A549 (cell line): ENCODE measurements at regions of chr3 and their contacts with region 1.

Region 1: DNA sequence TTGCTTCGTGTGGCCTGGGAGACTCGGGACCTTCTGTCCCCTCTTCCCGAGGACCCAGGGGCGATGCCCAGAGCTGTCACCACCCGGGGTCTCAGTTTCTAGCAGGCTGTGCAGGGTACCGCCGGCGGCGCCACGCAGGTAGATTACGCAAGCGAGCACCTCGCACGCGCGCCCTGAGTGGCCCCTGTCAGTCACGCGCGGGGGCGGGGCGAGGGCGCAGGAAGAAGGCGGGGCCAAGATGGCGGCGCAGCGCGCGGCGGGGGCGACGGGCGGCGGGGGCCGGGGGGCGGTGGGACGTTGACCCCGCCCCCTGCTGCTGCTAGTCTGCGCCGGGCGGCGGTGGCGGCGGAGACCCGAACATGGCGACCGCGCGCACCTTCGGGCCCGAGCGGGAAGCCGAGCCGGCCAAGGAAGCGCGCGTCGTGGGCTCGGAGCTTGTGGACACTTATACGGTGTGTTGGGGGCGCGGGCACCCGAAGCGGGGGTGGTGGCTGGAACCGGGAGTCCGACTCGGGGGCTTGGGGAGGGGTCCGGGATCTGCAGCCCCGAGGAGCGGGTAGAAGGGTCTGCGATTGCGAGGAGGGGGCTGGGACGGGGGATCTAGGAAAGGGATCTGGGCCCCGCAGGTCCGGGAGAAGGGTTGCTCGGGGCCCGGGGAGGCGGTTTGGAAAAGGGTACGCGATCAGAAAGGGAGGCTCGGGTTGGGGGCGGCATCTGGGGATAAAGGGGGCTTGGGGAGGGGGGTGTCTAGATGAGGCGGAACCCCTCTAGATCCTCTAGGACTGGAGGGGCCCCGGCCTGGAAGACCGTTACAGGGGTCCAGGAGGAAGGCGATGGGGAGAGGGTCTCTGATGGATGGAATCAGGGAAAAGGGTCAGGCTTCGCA is at the start of gene NISCH:
- DNase-seq: peak; percentile 60 to 68
- ATAC-seq: peak; percentile 57 to 77
- H3K4me3 ChIP-seq: peak within 1 kb of the TSS; percentile 66
- H3K27ac ChIP-seq: peak within 1 kb of the TSS; percentile 84 to 99
- H3K4me1 ChIP-seq: peaks cover 16% of the 10 kb centered on the region
- CTCF ChIP-seq: no peak
- EP300 ChIP-seq: no peak
- POLR2A ChIP-seq: peak; percentile 75
- RAD21 ChIP-seq: no peak
- polyA plus RNA-seq, gene NISCH: 17.3 and 19.2 TPM in 2 replicates

Region 2: DNA sequence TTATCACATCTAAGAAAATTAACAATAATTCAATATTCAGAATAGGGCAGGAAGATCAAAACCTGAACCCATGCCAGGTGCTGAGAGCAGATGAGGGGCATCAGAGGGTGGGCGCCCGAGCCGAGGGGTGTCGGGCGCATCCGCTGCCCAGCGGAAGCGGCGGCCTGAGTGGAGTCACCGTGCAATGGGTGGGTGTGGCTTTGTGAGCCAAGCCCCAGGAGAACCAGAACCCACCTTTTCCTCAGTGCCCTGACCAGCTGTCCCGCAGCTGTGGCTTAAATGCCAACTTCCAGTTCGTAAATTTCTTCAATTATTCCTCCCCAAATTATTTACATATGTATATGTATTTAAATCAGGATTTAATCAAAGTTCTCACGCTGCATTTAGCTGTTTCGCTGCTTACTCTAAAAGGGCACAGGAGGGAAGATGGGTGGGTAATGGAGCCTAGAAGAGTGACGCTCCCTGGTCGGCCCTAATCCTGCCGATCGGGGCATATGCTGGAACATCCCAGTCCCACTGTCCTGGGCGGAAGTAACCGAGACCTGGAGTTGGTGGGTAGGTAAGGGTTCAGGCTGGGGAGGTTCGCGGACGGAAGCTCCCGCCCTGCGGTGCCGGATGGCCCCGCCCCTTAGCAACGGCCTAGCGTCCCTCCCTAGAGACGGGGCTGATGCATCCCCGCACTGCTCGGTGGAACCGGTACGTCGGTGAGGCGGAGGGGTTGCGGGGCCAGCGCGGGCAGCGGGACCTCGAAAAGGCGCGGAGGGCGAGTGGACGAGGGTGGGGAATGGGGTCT is 138.1 kb before region 1 on chr3:
- CTCF ChIA-PET with region 1: no interaction called
- POLR2A ChIA-PET with region 1: no interaction called
- DNase-seq: no peak
- ATAC-seq: no peak
- H3K4me3 ChIP-seq: no peak overlapping the region
- H3K27ac ChIP-seq: no peak overlapping the region
- H3K4me1 ChIP-seq: peaks cover 16% of the 10 kb centered on the region
- CTCF ChIP-seq: no peak
- EP300 ChIP-seq: no peak
- POLR2A ChIP-seq: no peak
- RAD21 ChIP-seq: no peak

Region 3: DNA sequence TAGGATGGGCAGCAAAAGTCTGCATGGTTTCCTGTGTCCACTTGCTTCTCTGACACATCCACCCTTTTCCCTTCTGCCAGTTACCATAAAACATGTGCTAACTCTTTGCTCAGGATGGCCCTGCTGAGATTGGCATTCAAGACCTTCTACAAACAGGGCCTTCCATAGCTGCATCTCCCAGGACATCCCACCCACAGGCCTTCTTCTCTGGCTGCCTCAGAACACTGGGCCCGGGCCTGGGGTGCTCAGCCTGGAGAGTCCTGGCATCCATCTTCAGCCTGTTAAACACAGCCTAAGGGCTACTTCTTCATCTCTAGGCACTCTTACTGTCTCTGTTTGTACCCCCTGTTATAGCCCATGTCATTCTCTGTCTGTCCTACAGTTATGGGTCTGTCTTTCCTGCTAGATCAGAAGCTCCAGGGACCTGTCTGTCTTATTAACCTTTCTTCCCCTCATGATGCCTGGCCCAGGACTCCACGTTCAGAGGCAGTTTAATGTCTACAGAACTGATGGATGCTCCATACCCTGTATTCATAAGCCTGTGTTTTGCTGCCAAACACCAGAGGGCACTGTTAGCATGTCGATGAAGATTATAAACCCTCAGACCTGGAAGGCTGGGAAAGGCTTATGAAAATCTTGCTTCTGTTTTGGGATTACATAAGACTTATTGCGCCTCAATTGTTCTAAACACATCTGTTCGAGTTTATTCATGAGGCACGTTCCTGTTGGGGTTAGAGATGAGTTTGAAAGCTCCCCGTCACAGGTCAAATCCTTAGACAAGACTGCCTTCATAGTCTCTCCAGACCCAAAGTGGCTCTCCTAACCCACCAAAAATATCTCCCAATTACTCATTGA is 27.1 kb before region 1 on chr3:
- CTCF ChIA-PET with region 1: interaction called, 351 read pairs
- POLR2A ChIA-PET with region 1: no interaction called
- DNase-seq: peak; percentile 45 to 61
- ATAC-seq: peak; percentile 93 to 98
- H3K4me3 ChIP-seq: no peak overlapping the region
- H3K27ac ChIP-seq: no peak overlapping the region
- H3K4me1 ChIP-seq: no peaks in the 10 kb centered on the region
- CTCF ChIP-seq: peak; percentile 68
- EP300 ChIP-seq: no peak
- POLR2A ChIP-seq: no peak
- RAD21 ChIP-seq: peak; percentile 64 to 74

Region 4: DNA sequence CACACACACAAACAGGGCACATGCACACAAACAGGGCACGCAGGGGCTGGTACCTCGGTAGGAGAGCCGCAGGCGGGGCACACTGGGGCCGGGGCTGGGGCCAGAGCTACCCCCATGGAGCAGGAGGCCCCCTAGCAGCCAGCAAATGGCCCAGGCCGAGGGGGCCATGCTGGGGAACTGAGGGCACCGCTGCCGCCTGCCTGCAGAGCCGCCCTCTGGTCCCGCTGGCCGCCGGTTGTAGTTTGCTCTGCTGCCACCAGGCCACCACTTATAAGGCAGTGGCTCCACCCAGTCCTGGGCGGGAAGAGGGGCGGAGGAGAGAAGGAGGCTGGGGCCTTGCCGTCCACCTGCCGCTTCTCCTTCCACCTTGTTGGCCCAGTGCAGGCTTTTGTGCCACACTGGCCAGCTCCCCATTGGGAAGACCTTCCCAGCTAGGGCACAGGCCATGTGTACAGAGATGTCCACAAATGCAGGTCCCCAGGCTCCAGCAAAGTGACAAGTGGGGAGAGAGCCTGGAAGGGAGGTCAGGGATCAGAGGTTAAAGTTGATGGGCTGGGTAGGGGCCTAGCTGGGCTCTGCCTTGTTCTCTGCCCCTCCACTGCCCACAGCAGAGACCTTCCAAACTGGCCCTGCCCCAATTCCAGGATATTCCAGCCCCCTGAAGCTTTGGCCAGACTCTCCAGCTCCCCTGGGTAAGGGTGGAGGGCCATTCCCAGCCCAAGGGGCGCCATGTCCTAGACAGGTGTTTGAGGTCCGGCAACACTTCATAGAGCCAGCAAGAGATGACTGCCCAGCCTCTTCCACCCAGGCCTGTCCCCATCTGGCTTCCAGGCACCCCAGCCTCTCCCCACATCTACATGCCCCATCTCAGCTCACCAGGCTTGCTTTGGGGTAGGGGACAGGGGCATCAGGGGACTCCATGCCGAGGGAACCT is 10.4 kb before region 1 on chr3 and contains the start of gene SEMA3G:
- CTCF ChIA-PET with region 1: interaction called, 17 read pairs
- POLR2A ChIA-PET with region 1: no interaction called
- DNase-seq: peak; percentile 50 to 72
- ATAC-seq: peak; percentile 79 to 93
- H3K4me3 ChIP-seq: no peak within 1 kb of the TSS
- H3K27ac ChIP-seq: peak within 1 kb of the TSS in 1 of 2 experiments; percentile 55; a peak in 2 of 6 replicates
- H3K4me1 ChIP-seq: peaks cover 6% of the 10 kb centered on the region
- CTCF ChIP-seq: no peak
- EP300 ChIP-seq: no peak
- POLR2A ChIP-seq: peak; percentile 44; the same call in 1 of the 2 replicates
- RAD21 ChIP-seq: no peak
- polyA plus RNA-seq, gene SEMA3G: 0.05 and 0.08 TPM in 2 replicates